ENCODE measurements at regions of chr1 and their contacts with region 1.

Region 1: GRCh38 chr1:13667691-13668090 is 32.3 kb upstream of the PRDM2 start:
- DNase-seq: no peak
- H3K4me3 ChIP-seq: no peak overlapping the region
- H3K27ac ChIP-seq: no peak overlapping the region
- H3K4me1 ChIP-seq: no peaks in the 10 kb centered on the region
- H3K27me3 ChIP-seq: no peaks in the 10 kb centered on the region
- CTCF ChIP-seq: no peak

Region 2: DNA sequence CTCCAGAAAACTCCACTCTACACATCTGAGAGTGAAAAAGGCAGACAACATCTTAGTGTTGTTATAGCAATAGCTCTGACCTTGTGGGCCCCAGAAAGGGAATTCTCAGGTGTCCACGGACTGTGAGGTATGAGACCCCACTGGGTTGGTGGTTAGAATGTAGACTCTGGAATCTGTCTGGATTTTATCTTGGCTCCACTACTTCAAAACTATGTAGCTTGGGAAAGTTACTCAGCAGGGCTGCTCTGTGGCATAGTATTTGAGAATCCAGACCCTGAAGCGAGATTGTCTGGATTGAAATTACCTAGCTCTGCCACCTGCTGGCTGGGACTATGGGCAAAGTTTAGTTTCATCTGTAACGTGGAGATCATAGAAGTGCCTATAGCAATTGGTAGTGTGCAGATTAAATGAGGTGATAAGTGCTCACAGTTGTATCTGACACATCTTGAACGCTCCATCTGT is 58.1 kb after region 1 on chr1:
- intact Hi-C with region 1: loop called (anchors 5 kb)
- DNase-seq: no peak
- H3K4me3 ChIP-seq: no peak overlapping the region
- H3K27ac ChIP-seq: no peak overlapping the region
- H3K4me1 ChIP-seq: no peaks in the 10 kb centered on the region
- H3K27me3 ChIP-seq: no peaks in the 10 kb centered on the region
- CTCF ChIP-seq: peak in 2 of 3 experiments; percentile 18 to 31

Region 3: GRCh38 chr1:13813398-13814012 is 145.8 kb after region 1 on chr1:
- intact Hi-C with region 1: loop called (anchors 5 kb)
- DNase-seq: no peak
- H3K4me3 ChIP-seq: no peak overlapping the region
- H3K27ac ChIP-seq: no peak overlapping the region
- H3K4me1 ChIP-seq: no peaks in the 10 kb centered on the region
- H3K27me3 ChIP-seq: no peaks in the 10 kb centered on the region
- CTCF ChIP-seq: peak; percentile 39 to 59 (median 58)